Natural killer cell (primary cell): ENCODE measurements at regions of chr18 and their contacts with region 1.

Region 1: GRCh38 chr18:54983041-54983686 is 23.9 kb upstream of the CCDC68 start:
- DNase-seq: peak in 1 of 2 donors; percentile 65
- ATAC-seq: peak; percentile 61 to 75 (median 66)
- H3K4me3 ChIP-seq: no peak overlapping the region
- H3K4me3 Mint-ChIP-seq: no peak overlapping the region
- H3K27ac ChIP-seq: no peak overlapping the region
- H3K27ac Mint-ChIP-seq: no peak overlapping the region
- H3K4me1 ChIP-seq: no peaks in the 10 kb centered on the region
- H3K4me1 Mint-ChIP-seq: peaks cover 0 to 4% of the 10 kb centered on the region in 2 donors
- H3K27me3 ChIP-seq: no peaks in the 10 kb centered on the region
- H3K27me3 Mint-ChIP-seq: peaks cover 0 to 8% of the 10 kb centered on the region in 2 donors
- CTCF ChIP-seq: peak; percentile 82

Region 2: DNA sequence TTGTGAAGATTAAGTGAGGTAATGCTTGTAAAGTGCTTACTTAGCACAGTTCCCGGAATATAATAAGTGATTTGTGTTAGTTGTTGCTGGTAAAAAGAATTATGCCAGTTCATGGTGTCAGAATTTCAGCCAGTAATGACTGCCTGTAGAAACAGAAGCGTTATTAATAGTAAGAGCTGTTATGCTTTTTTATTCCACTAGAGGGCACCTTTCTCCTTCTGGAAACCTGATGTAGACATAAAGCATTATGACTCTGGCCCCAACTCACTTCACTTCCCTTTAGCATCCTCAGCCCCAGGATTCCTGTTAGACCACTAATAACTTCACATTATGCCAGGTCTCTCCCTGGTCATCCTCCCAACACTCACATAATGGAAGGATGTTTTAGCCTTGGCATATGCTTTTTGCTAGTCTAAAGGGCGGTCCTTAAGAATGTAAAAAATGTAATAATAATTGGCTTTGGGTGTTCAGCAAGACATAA is 590.6 kb before region 1 on chr18:
- intact Hi-C with region 1: loop called (anchors 1 kb)
- DNase-seq: peak in 1 of 2 donors; percentile 75
- ATAC-seq: peak; percentile 66 to 76 (median 71)
- H3K4me3 ChIP-seq: no peak overlapping the region
- H3K4me3 Mint-ChIP-seq: no peak overlapping the region
- H3K27ac ChIP-seq: no peak overlapping the region
- H3K27ac Mint-ChIP-seq: no peak overlapping the region
- H3K4me1 ChIP-seq: peaks cover 5% of the 10 kb centered on the region
- H3K4me1 Mint-ChIP-seq: peaks cover 13% of the 10 kb centered on the region in 2 donors
- H3K27me3 ChIP-seq: no peaks in the 10 kb centered on the region
- H3K27me3 Mint-ChIP-seq: no peaks in the 10 kb centered on the region
- CTCF ChIP-seq: peak; percentile 80

Region 3: DNA sequence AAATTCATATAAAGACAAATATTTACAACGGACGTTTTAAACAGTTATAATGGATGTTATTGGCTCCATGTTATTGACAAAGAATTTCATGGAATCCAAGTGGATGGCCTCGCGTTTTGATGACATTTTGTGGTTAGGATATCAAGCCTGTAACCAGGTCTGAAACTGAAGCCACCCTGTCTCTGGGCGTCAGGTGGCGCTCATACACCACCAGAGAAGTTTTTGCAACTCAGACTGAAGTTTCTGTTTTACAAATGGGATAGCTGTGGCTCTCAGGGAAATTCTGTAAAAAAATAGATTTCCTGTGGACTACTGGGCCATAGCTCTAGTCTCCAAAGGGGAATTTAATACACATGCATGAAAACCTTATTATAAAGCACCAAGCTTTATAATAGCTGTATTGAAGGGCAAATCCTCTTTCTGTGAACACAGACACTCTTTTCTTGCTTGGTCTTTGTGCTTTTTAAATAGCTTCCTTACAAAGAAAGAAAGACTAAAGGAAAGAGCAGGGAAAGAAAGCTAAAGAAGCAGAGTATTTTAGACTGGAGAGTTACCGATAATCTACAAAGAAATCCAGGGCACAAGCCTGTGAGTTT is 538.7 kb before region 1 on chr18:
- intact Hi-C with region 1: loop called (anchors 1 kb)
- DNase-seq: peak in 1 of 2 donors; percentile 32
- ATAC-seq: peak in 1 of 3 donors; percentile 47
- H3K4me3 ChIP-seq: no peak overlapping the region
- H3K4me3 Mint-ChIP-seq: no peak overlapping the region
- H3K27ac ChIP-seq: no peak overlapping the region
- H3K27ac Mint-ChIP-seq: no peak overlapping the region
- H3K4me1 ChIP-seq: no peaks in the 10 kb centered on the region
- H3K4me1 Mint-ChIP-seq: no peaks in the 10 kb centered on the region
- H3K27me3 ChIP-seq: no peaks in the 10 kb centered on the region
- H3K27me3 Mint-ChIP-seq: peaks cover 7 to 17% of the 10 kb centered on the region in 2 donors
- CTCF ChIP-seq: peak; percentile 21

Region 4: DNA sequence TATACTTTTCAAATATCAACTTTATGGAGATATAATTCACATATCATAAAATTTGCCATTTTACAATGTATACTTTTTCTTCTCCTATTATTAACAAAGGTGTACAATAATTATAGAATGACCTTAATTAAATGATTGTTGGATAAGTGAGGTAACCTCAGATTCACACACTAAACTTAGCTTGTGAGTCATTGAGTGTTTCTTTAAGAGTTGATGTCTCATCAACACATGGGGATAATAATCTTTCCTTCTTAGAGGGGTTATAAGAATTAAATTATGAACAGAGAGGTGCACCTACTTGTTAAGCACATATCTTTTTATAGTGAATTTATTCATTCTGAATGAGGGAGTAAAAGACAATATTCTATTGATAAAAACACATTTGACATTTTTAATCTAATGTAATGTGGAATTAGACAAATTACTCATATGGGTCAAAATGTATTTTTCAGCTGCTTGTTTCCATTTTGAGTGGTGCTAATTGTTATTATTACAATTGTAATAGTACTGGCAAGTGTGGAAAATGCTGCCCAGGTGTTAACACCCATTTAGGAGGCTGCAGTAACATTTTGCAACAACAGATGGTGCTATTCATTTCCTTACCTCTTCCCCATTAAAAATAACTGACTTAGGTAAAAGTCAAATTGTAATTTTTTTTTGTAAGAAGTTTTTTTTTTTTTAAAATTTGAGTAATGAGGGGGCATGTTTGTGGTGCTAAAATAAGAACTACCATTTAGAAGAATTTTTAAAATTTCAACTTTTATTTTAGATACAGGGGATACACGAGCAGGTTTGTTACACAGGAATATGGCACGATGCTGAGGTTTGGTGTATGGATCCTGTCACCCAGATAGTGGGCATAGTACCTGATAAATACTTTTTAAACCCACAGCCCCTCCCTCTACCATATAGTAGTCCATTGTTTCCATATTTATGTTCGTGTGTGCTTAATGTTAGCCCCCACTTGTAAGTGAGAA is 424.3 kb before region 1 on chr18:
- intact Hi-C with region 1: loop called (anchors 2 kb)
- DNase-seq: peak in 1 of 2 donors; percentile 47
- ATAC-seq: no peak
- H3K4me3 ChIP-seq: no peak overlapping the region
- H3K4me3 Mint-ChIP-seq: no peak overlapping the region
- H3K27ac ChIP-seq: no peak overlapping the region
- H3K27ac Mint-ChIP-seq: no peak overlapping the region
- H3K4me1 ChIP-seq: no peaks in the 10 kb centered on the region
- H3K4me1 Mint-ChIP-seq: no peaks in the 10 kb centered on the region
- H3K27me3 ChIP-seq: no peaks in the 10 kb centered on the region
- H3K27me3 Mint-ChIP-seq: peaks cover 0 to 3% of the 10 kb centered on the region in 2 donors
- CTCF ChIP-seq: peak; percentile 60

Region 5: GRCh38 chr18:54679318-54680149 is 303.6 kb before region 1 on chr18:
- intact Hi-C with region 1: loop called (anchors 1 kb)
- DNase-seq: peak in 1 of 2 donors; percentile 63
- ATAC-seq: peak in 2 of 3 donors; percentile 42 to 72
- H3K4me3 ChIP-seq: no peak overlapping the region
- H3K4me3 Mint-ChIP-seq: no peak overlapping the region
- H3K27ac ChIP-seq: no peak overlapping the region
- H3K27ac Mint-ChIP-seq: no peak overlapping the region
- H3K4me1 ChIP-seq: no peaks in the 10 kb centered on the region
- H3K4me1 Mint-ChIP-seq: peaks cover 0 to 7% of the 10 kb centered on the region in 2 donors
- H3K27me3 ChIP-seq: no peaks in the 10 kb centered on the region
- H3K27me3 Mint-ChIP-seq: peaks cover 3 to 21% of the 10 kb centered on the region in 2 donors
- CTCF ChIP-seq: peak; percentile 46

Region 6: GRCh38 chr18:55001394-55002024 is 18.3 kb after region 1 on chr18:
- intact Hi-C with region 1: no loop called
- DNase-seq: no peak
- ATAC-seq: no peak
- H3K4me3 ChIP-seq: no peak overlapping the region
- H3K4me3 Mint-ChIP-seq: no peak overlapping the region
- H3K27ac ChIP-seq: no peak overlapping the region
- H3K27ac Mint-ChIP-seq: no peak overlapping the region
- H3K4me1 ChIP-seq: no peaks in the 10 kb centered on the region
- H3K4me1 Mint-ChIP-seq: no peaks in the 10 kb centered on the region
- H3K27me3 ChIP-seq: no peaks in the 10 kb centered on the region
- H3K27me3 Mint-ChIP-seq: peaks cover 5 to 25% of the 10 kb centered on the region in 2 donors
- CTCF ChIP-seq: no peak

Region 7: GRCh38 chr18:55136864-55137263 is 153.7 kb after region 1 on chr18:
- intact Hi-C with region 1: no loop called
- DNase-seq: no peak
- ATAC-seq: no peak
- H3K4me3 ChIP-seq: no peak overlapping the region
- H3K4me3 Mint-ChIP-seq: no peak overlapping the region
- H3K27ac ChIP-seq: no peak overlapping the region
- H3K27ac Mint-ChIP-seq: no peak overlapping the region
- H3K4me1 ChIP-seq: no peaks in the 10 kb centered on the region
- H3K4me1 Mint-ChIP-seq: no peaks in the 10 kb centered on the region
- H3K27me3 ChIP-seq: no peaks in the 10 kb centered on the region
- H3K27me3 Mint-ChIP-seq: peaks cover 6 to 10% of the 10 kb centered on the region in 2 donors
- CTCF ChIP-seq: no peak